Common myeloid progenitor, CD34-positive (primary cell): ENCODE measurements at regions of chr17 and their contacts with region 1.

Region 1: DNA sequence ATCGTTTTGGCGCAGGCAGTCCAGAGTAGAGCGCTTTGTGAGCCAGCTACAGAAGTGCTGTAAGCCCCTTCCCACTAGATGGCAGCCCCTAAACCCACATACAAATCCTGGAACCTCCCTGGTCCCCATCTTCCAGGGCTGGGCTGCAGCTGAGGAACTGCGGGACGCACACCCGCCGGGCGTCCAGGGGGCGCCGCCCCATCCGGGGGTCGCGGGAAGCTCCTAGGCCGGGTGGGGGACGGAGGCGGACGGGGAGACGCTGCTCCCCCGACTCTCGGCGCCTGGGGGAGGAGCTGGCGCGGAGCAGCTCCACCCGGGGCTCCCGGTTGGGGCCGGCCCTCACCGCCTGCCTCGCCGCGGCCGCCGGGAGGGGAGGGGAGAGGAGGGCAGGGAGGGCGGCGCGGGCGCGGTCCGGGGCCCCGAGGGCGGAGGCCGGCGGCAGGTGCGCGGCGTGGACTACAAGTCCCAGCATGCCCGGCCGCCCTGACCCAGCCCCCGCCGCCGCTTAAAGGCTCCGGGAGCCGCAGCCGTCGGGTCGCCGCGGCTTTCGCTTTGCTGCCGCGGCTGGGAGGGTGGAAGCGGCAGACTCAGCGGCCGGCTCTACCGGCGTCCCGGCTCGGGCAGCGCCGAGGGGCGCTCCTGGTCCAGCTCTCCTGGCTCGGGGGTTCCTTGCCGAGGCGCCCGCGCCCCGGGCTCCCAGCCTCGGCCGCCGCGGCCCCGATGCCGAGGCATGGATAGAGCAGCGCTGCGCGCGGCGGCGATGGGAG is at the start of gene KSR1:
- DNase-seq: peak; percentile 87 to 94 (median 89)
- H3K4me3 ChIP-seq: peak within 1 kb of the TSS; percentile 46 to 92 (median 77)
- H3K27ac ChIP-seq: peak within 1 kb of the TSS in 1 of 2 experiments; percentile 57
- H3K4me1 ChIP-seq: peaks cover 3 to 29% (median 24%) of the 10 kb centered on the region in 4 experiments
- H3K27me3 ChIP-seq: no peaks in the 10 kb centered on the region

Region 2: DNA sequence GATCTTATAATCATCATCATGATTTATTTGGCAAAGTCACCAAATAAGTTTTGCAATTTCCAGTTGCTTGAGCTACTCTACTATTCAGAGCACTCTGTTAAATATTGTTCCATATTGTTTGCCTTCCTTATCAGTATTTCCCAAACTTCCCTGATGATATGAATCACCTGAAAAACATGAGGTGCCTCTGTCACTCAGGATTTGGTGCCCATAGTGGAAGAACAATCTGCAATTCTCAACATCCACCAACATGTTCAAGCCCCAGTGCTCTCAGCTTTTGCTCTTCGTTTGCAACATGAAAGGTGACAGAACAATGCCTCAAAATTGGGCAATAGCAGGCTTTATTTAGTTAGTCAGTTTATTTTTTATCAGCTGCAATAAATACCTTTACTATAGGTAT is 190.8 kb before region 1 on chr17:
- CTCF ChIA-PET with region 1: no interaction called
- POLR2A ChIA-PET with region 1: no interaction called
- DNase-seq: no peak
- H3K4me3 ChIP-seq: no peak overlapping the region
- H3K27ac ChIP-seq: no peak overlapping the region
- H3K4me1 ChIP-seq: no peaks in the 10 kb centered on the region
- H3K27me3 ChIP-seq: no peaks in the 10 kb centered on the region

Region 3: DNA sequence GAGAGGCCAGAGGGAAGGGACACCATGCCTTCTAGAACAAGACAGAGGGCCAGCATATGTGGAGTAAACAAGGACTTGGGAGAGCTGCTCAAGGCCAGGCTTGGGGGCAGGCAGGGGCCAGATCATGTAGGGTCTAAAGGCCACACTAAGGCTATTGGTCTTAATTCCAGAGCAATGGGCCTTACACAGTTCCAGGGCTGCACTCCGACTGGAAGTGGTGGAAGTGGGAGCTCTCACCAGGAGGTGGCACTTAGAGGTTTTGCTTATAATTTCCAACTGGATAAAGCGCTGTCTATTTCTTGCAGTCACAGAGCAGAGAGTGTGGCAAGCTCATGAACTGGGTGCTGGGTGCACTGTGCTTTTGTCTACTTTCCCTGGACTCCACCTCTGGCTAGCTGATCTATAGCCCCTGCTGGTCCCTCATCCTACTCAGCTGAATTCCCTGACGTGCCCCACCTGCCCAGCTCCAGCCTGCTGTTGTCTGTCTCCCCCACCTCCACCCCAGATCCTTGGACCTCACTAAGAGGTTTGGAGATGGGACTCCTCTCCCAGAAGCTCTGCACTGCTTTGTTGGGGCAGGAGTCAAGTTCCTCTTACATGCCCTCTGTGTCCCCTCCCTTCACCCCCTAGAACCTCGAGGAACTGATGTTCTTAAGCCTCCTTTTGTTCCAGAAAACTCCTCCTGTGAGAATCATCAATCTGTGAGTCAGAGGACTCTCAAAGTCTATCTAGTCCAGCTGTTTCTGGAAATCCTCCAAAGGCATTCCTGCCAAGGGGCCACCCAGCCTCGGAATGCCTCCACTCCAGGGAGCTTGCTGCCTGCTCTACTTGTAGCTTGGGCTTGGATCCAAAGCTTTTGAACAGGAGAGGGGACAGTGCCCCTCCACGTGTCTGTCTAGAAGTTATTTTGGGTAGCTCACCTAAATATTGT is 47.9 kb before region 1 on chr17:
- CTCF ChIA-PET with region 1: no interaction called
- POLR2A ChIA-PET with region 1: no interaction called
- DNase-seq: no peak
- H3K4me3 ChIP-seq: no peak overlapping the region
- H3K27ac ChIP-seq: no peak overlapping the region
- H3K4me1 ChIP-seq: peaks cover 0 to 8% (median 2%) of the 10 kb centered on the region in 4 experiments
- H3K27me3 ChIP-seq: no peaks in the 10 kb centered on the region

Region 4: DNA sequence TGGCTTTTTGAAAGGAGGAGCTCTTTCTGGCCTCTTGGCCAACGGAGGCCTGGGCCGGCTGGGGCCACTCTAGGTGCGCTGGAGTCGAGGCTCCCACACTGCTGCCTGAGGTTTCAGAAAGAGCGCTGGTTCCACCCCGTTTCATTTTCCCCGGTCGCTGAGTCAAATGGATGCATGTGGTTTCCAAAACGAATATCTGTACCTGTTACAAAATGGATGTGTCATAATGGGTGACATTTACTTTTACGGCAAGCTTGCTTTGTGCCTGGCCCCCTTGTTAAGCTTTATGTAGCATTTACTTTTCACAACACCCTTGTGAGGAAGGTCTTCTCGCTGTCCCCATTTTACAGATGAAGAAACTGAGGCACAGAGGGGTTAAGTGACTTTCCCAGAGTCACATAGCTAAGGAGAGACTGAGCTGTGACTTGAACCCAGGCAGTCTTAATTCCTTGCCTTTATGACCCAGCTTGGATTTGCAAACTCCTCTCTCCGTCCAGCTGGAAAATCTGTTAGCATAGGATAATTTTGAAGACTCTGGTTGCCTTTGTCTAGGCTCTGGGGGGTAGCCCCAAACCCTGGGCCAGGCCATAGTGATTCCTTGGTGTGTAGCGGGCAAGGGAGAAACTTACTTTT is 10.8 kb after region 1 on chr17:
- CTCF ChIA-PET with region 1: interaction called, 10 read pairs
- POLR2A ChIA-PET with region 1: interaction called, 6 read pairs
- DNase-seq: peak; percentile 43 to 80 (median 76)
- H3K4me3 ChIP-seq: peak overlapping the region in 4 of 7 experiments; percentile 25 to 62 (median 38)
- H3K27ac ChIP-seq: no peak overlapping the region
- H3K4me1 ChIP-seq: peaks cover 0 to 67% (median 34%) of the 10 kb centered on the region in 4 experiments
- H3K27me3 ChIP-seq: no peaks in the 10 kb centered on the region

Region 5: GRCh38 chr17:27473748-27474609 is 17.9 kb after region 1 on chr17:
- CTCF ChIA-PET with region 1: interaction called, 11 read pairs
- POLR2A ChIA-PET with region 1: interaction called, 8 read pairs
- DNase-seq: peak; percentile 89 to 99 (median 98)
- H3K4me3 ChIP-seq: peak overlapping the region in 6 of 7 experiments; percentile 25 to 66 (median 40)
- H3K27ac ChIP-seq: peak overlapping the region; percentile 67 to 89
- H3K4me1 ChIP-seq: peaks cover 8 to 77% (median 71%) of the 10 kb centered on the region in 4 experiments
- H3K27me3 ChIP-seq: no peaks in the 10 kb centered on the region